Activated CD4-positive, alpha-beta T cell treated with anti-CD3 and anti-CD28 coated beads for 36 hours (primary cell): ENCODE measurements at regions of chr1 and their contacts with region 1.

Region 1: GRCh38 chr1:55326496-55327243 is 111.5 kb upstream of the USP24 start:
- DNase-seq: no peak
- ATAC-seq: no peak
- H3K4me3 Mint-ChIP-seq: no peak overlapping the region
- H3K27ac Mint-ChIP-seq: no peak overlapping the region
- H3K4me1 Mint-ChIP-seq: no peaks in the 10 kb centered on the region
- H3K27me3 Mint-ChIP-seq: peaks cover 4% of the 10 kb centered on the region

Region 2: DNA sequence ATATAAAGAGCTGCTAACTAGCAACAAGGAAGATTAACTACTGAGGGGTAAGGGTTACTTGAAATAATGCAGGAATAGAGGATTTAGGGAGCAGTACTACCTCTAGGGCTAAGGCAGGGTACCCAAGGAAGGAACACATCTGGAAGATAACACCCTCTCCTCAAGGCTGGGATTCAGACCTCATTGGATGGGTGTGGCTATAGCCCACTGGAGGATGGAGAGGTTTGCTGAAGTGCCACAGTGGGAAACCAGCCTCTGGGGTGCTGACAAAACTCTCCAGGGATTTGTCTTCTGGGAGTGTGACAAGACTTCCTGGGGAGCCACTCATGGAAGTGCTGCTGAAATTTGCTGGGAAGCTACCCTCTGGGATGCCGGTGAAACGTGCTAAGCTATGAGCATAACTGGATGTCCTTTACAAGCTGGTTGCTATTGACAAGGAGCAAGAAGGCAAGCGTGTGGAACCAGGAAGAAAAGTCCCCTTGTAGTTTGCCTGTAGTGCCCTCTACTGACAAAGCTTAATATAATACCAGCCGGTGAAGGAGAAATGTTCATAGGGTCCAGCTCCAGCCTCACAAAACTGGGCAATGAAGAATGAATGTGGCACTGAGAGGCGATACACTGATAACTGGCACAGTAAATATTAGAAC is 11.3 kb after region 1 on chr1:
- CTCF ChIA-PET with region 1: interaction called, 11 read pairs
- POLR2A ChIA-PET with region 1: no interaction called
- intact Hi-C with region 1: no loop called
- DNase-seq: peak; percentile 31
- ATAC-seq: peak; percentile 75
- H3K4me3 Mint-ChIP-seq: no peak overlapping the region
- H3K27ac Mint-ChIP-seq: no peak overlapping the region
- H3K4me1 Mint-ChIP-seq: no peaks in the 10 kb centered on the region
- H3K27me3 Mint-ChIP-seq: no peaks in the 10 kb centered on the region